Activated B cell treated with CpG ODN at 0.5 μM for 24 hours (primary cell): ENCODE measurements at regions of chr1 and their contacts with region 1.

Region 1: DNA sequence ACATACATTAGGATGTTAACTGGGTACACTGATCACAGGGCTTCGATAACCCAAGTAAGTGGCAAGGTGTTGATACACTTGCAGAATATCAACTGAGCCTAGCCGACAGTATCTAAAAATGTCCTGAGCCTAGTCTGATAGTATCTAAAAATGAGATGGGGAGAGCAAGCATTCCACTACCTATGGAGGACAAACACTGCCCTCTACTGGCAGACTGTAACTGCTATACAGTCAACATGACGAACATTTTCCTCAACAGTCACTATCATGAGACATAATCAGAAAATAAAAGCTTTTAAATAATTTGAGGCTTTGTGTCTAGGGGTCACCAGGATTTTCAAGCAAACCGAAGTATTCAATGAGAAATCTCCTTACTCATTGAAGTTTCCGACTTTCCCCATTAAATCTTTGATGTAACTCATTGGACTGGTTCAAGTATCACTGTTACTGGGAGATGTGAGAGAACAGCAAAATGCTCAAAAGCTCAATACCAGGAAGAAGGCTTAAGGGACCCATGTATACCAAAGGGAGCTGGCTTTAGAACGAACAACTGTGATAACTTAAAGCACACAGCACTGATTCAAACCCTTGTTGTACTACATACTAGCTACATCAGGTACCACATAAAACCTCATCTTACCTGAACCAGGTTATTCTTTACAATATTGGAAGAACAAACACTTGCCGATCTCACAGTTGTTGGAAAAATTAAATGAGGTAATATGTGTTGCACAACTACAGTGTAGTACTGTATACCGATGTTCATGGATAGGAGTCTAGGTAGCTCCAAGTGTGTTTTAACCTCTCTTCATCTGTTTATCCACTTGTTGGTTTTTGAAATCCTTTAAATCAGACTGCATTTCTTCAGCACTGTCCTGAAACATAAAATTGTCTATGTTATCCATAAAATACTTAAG is 31.1 kb upstream of the SLC45A3 start:
- DNase-seq: no peak
- ATAC-seq: peak; percentile 91
- H3K4me3 Mint-ChIP-seq: no peak overlapping the region
- H3K27ac Mint-ChIP-seq: peak overlapping the region; percentile 9
- H3K4me1 Mint-ChIP-seq: peaks cover 23% of the 10 kb centered on the region
- H3K27me3 Mint-ChIP-seq: no peaks in the 10 kb centered on the region
- CTCF ChIP-seq: peak; percentile 46

Region 2: GRCh38 chr1:204791453-204792353 is 919.7 kb before region 1 on chr1:
- CTCF ChIA-PET with region 1: no interaction called
- POLR2A ChIA-PET with region 1: no interaction called
- intact Hi-C with region 1: no loop called
- DNase-seq: peak; percentile 67
- ATAC-seq: peak; percentile 79
- H3K4me3 Mint-ChIP-seq: no peak overlapping the region
- H3K27ac Mint-ChIP-seq: no peak overlapping the region
- H3K4me1 Mint-ChIP-seq: no peaks in the 10 kb centered on the region
- H3K27me3 Mint-ChIP-seq: peaks cover 25% of the 10 kb centered on the region
- CTCF ChIP-seq: peak; percentile 81

Region 3: GRCh38 chr1:205528887-205529825 is 182.2 kb before region 1 on chr1:
- CTCF ChIA-PET with region 1: interaction called, 5 read pairs
- POLR2A ChIA-PET with region 1: no interaction called
- intact Hi-C with region 1: loop called (anchors 1 kb)
- DNase-seq: peak; percentile 84
- ATAC-seq: peak; percentile 92
- H3K4me3 Mint-ChIP-seq: peak overlapping the region; percentile 72
- H3K27ac Mint-ChIP-seq: no peak overlapping the region
- H3K4me1 Mint-ChIP-seq: peaks cover 4% of the 10 kb centered on the region
- H3K27me3 Mint-ChIP-seq: peaks cover 3% of the 10 kb centered on the region
- CTCF ChIP-seq: peak; percentile 58

Region 4: GRCh38 chr1:205631727-205632373 is 79.5 kb before region 1 on chr1 and contains the start of gene ELK4:
- CTCF ChIA-PET with region 1: interaction called, 13 read pairs
- POLR2A ChIA-PET with region 1: interaction called, 3 read pairs
- intact Hi-C with region 1: no loop called
- DNase-seq: peak; percentile 99
- ATAC-seq: peak; percentile 83
- H3K4me3 Mint-ChIP-seq: peak within 1 kb of the TSS; percentile 96
- H3K27ac Mint-ChIP-seq: peak within 1 kb of the TSS; percentile 96
- H3K4me1 Mint-ChIP-seq: peaks cover 46% of the 10 kb centered on the region
- H3K27me3 Mint-ChIP-seq: no peaks in the 10 kb centered on the region
- CTCF ChIP-seq: no peak
- total RNA-seq, gene ELK4: 130 and 141 TPM in 2 replicates

Region 5: GRCh38 chr1:205680073-205680851 is 31.1 kb before region 1 on chr1 and contains the start of gene SLC45A3:
- CTCF ChIA-PET with region 1: interaction called, 23 read pairs
- POLR2A ChIA-PET with region 1: interaction called, 6 read pairs
- intact Hi-C with region 1: no loop called
- DNase-seq: no peak
- ATAC-seq: peak; percentile 75
- H3K4me3 Mint-ChIP-seq: peak within 1 kb of the TSS; percentile 85
- H3K27ac Mint-ChIP-seq: peak within 1 kb of the TSS; percentile 46
- H3K4me1 Mint-ChIP-seq: peaks cover 26% of the 10 kb centered on the region
- H3K27me3 Mint-ChIP-seq: peaks cover 2% of the 10 kb centered on the region
- CTCF ChIP-seq: no peak
- total RNA-seq, gene SLC45A3: 6.9 and 7.4 TPM in 2 replicates

Region 6: GRCh38 chr1:205977402-205978014 is 266.1 kb after region 1 on chr1:
- CTCF ChIA-PET with region 1: interaction called, 44 read pairs
- POLR2A ChIA-PET with region 1: interaction called, 3 read pairs
- intact Hi-C with region 1: loop called (anchors 1 kb)
- DNase-seq: peak; percentile 65
- ATAC-seq: peak; percentile 95
- H3K4me3 Mint-ChIP-seq: no peak overlapping the region
- H3K27ac Mint-ChIP-seq: no peak overlapping the region
- H3K4me1 Mint-ChIP-seq: no peaks in the 10 kb centered on the region
- H3K27me3 Mint-ChIP-seq: peaks cover 2% of the 10 kb centered on the region
- CTCF ChIP-seq: peak; percentile 83